Activated naive CD4-positive, alpha-beta T cell treated with anti-CD3 and anti-CD28 coated beads, Interleukin-2, amount 10 ng/mL, durations not matched to agents 7 days and 5 days (primary cell): ENCODE measurements at regions of chr6 and their contacts with region 1.

Region 1: DNA sequence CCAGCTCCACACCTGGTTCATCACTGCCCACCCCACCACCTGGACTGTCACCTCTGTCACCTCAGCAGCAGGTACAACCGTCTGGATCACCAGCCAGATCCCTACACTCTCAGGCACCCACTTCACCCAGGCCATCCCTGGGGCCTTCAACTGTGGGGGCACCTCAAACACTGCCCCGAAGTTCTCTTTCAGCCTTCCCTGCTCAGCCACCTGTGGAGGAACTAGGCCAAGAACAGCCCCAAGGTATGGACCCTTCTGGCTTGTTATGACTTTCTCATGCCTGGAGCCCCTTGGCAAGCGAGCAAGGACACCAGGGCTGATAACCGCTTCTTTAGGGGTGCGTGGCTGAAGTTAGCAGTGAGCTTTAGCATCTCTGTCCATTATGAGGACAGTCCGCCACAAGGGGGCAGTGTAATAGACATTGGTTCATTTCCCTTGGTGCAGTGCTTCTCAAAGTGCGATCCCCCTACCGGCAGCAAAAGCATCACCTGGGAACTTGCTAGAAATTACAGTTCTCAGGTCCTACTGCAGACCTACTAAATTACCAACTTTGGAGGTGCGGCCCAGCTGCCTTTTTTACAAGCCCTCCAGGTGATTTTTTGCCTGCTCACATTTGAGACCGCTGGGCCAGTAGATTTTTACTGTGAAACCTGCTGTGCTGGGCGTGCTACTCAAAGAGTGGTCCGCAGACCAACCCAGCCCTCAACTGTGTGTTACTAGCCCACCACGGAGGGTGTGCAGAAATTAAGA is 32.5 kb downstream of the PNPLA1 start:
- DNase-seq: peak; percentile 96
- H3K4me3 Mint-ChIP-seq: no peak overlapping the region
- H3K27ac Mint-ChIP-seq: no peak overlapping the region
- H3K4me1 Mint-ChIP-seq: peaks cover 3% of the 10 kb centered on the region
- H3K27me3 Mint-ChIP-seq: peaks cover 28% of the 10 kb centered on the region

Region 2: DNA sequence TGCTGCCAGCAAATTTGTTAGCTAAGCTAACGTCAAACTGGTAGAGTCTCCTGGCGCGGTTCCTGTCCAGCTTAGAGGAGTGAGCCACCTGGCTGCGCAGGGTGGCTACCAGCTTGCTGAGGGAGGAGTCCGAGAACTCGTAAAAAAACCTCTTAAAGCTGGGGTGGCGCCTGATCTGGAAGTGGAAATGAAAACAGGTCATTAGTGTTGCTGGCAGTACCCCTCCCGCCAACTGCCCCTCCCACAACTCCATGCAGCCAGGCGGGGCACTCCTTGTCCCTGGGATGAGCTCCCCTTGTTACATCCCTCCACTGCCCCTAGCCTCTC is 17.0 kb after region 1 on chr6:
- CTCF ChIA-PET with region 1: interaction called, 15 read pairs
- DNase-seq: no peak
- H3K4me3 Mint-ChIP-seq: no peak overlapping the region
- H3K27ac Mint-ChIP-seq: no peak overlapping the region
- H3K4me1 Mint-ChIP-seq: no peaks in the 10 kb centered on the region
- H3K27me3 Mint-ChIP-seq: peaks cover 28% of the 10 kb centered on the region

Region 3: DNA sequence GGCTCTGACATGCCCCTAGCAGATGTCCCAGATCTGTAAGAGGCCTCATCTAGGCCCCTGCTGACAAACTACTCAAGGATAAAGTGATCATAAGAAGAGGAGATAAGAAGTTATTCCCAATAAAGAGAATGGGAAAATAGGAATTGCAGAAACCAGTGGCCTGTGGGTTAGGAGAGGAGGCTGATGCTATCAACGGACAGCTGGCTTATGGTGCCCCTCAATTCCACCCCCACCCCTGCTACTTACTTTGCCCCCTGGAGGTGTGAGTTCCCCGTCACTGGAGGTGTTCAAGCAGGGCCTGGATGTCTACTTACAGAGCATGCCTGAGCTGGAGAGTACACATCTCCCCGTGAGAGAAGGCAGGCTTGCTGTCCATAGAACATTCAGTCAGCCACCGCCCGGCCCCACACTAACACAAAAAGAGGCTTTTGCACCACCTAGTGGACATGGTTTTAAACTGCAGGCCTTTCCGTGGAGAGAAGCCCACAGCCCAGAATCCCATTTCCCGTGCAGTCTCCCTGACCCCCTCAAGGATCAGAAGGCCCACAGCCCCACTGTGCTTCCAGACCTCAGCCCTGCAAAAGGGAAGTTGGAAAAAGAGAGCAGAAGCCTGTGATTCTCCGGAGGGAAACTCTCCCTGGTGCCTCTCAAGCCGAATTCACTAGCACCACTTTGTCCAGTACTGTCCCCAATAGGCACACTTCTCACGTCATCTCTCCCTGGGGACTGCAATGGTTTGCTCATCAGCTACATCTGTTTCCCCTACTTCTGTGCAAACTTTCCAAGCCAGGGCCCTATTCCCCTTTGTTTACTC is 58.0 kb after region 1 on chr6:
- CTCF ChIA-PET with region 1: interaction called, 35 read pairs
- DNase-seq: peak; percentile 80
- H3K4me3 Mint-ChIP-seq: no peak overlapping the region
- H3K27ac Mint-ChIP-seq: no peak overlapping the region
- H3K4me1 Mint-ChIP-seq: peaks cover 21% of the 10 kb centered on the region
- H3K27me3 Mint-ChIP-seq: peaks cover 36% of the 10 kb centered on the region